Natural killer cell (primary cell): ENCODE measurements at regions of chr1 and their contacts with region 1.

Region 1: GRCh38 chr1:91883470-91883869 is 2.5 kb downstream of the TGFBR3 start:
- DNase-seq: peak in 1 of 2 donors; percentile 67
- ATAC-seq: peak in 1 of 3 donors; percentile 18
- H3K4me3 ChIP-seq: peak overlapping the region; percentile 52
- H3K4me3 Mint-ChIP-seq: peak overlapping the region; percentile 99
- H3K27ac ChIP-seq: no peak overlapping the region
- H3K27ac Mint-ChIP-seq: peak overlapping the region; percentile 85 to 97
- H3K4me1 ChIP-seq: peaks cover 43% of the 10 kb centered on the region
- H3K4me1 Mint-ChIP-seq: peaks cover 61 to 65% of the 10 kb centered on the region in 2 donors
- H3K27me3 ChIP-seq: no peaks in the 10 kb centered on the region
- H3K27me3 Mint-ChIP-seq: no peaks in the 10 kb centered on the region
- CTCF ChIP-seq: peak; percentile 64

Region 2: DNA sequence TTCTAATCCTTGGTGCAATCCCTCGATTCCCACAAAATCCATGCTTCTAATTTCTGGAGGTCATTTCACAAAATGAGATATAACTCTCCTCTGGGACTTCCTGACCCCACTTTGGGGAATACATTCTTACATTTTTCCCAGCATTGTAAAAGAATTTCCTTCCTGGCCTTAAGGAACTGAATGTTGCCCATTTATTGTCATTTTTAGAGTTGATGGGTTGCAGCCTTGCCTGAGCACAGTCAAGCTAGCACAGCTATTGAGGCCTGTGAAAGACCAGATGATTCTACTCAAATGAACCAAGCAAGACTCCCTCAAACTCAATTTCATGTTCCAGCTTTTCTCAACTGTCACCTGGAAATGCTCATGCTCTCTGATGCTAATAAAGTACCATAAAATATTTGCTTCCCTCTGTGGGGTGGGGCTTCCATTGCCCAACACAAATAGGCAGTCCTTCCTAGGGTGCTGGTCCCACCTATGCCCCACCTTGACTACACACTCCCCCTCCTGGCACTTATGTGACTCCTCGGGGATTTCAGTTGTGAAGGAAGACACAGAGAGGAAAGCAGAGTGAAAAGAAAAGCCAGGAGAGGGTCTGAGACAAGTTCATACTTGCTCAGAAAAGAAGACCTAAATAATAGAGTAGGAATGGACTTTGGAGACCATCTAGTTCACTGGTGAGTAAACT is 406.8 kb before region 1 on chr1:
- intact Hi-C with region 1: no loop called
- DNase-seq: no peak
- ATAC-seq: no peak
- H3K4me3 ChIP-seq: no peak overlapping the region
- H3K4me3 Mint-ChIP-seq: no peak overlapping the region
- H3K27ac ChIP-seq: no peak overlapping the region
- H3K27ac Mint-ChIP-seq: no peak overlapping the region
- H3K4me1 ChIP-seq: no peaks in the 10 kb centered on the region
- H3K4me1 Mint-ChIP-seq: no peaks in the 10 kb centered on the region
- H3K27me3 ChIP-seq: no peaks in the 10 kb centered on the region
- H3K27me3 Mint-ChIP-seq: peaks cover 0 to 3% of the 10 kb centered on the region in 2 donors
- CTCF ChIP-seq: no peak

Region 3: DNA sequence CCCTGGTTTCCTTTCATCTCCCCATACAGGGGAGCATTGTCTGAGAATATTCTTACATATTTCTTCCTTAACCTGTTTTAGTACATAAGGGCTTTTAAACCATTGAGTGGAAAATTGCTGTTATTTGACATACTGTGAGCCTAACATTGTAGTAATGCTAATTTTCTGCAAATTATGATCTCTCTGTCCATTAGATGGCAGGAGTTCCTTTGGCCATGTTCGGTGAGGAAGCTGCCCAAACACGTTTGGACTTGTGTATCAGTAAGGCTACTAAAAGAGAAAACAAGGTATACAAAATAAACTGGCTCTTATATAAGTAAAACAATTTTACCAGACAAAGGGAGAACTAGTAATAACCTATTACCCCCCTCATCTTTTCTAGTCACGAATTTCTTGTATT is 353.6 kb before region 1 on chr1:
- intact Hi-C with region 1: loop called (anchors 5 kb)
- DNase-seq: peak in 1 of 2 donors; percentile 29
- ATAC-seq: peak in 2 of 3 donors; percentile 21 to 25
- H3K4me3 ChIP-seq: no peak overlapping the region
- H3K4me3 Mint-ChIP-seq: no peak overlapping the region
- H3K27ac ChIP-seq: no peak overlapping the region
- H3K27ac Mint-ChIP-seq: peak overlapping the region; percentile 68 to 84
- H3K4me1 ChIP-seq: peaks cover 42% of the 10 kb centered on the region
- H3K4me1 Mint-ChIP-seq: peaks cover 66 to 68% of the 10 kb centered on the region in 2 donors
- H3K27me3 ChIP-seq: no peaks in the 10 kb centered on the region
- H3K27me3 Mint-ChIP-seq: no peaks in the 10 kb centered on the region
- CTCF ChIP-seq: peak; percentile 27

Region 4: GRCh38 chr1:91754348-91754747 is 129.1 kb before region 1 on chr1:
- intact Hi-C with region 1: loop called (anchors 1 kb)
- DNase-seq: no peak
- ATAC-seq: peak; percentile 32 to 61 (median 52)
- H3K4me3 ChIP-seq: no peak overlapping the region
- H3K4me3 Mint-ChIP-seq: peak overlapping the region; percentile 62
- H3K27ac ChIP-seq: peak overlapping the region; percentile 57
- H3K27ac Mint-ChIP-seq: peak overlapping the region; percentile 86 to 87
- H3K4me1 ChIP-seq: peaks cover 36% of the 10 kb centered on the region
- H3K4me1 Mint-ChIP-seq: peaks cover 70 to 76% of the 10 kb centered on the region in 2 donors
- H3K27me3 ChIP-seq: no peaks in the 10 kb centered on the region
- H3K27me3 Mint-ChIP-seq: no peaks in the 10 kb centered on the region
- CTCF ChIP-seq: no peak

Region 5: DNA sequence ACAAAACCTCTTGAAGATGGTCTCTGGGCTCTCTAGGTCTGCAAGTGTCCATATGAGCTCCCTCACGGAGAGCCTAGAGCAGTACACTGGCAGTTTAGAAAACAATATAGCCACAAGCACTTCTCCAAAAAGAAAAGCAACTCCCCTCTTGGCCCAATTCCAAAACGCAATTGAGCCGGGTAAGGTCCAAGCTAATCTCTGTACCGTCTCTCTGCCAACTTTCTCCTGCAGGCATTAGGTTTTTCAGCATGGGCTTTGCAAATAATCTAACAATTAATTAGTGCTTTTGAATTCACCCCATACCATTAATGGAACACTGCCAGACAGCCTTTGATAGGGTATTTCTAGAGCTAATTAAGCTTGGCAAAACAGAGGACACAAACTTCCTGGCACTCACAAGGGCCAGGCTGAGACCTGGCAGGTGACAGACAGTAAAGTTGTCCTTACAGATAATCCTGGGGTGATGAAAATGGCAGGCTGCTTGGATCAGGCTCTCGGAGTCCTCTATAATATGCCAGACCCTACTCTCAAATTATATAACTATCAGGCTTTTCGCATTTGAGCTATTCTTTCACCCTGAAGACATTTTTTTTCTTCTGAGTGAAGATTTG is 37.4 kb before region 1 on chr1:
- intact Hi-C with region 1: loop called (anchors 5 kb)
- DNase-seq: no peak
- ATAC-seq: peak; percentile 41 to 68 (median 61)
- H3K4me3 ChIP-seq: no peak overlapping the region
- H3K4me3 Mint-ChIP-seq: peak overlapping the region; percentile 73
- H3K27ac ChIP-seq: peak overlapping the region; percentile 21
- H3K27ac Mint-ChIP-seq: peak overlapping the region; percentile 69 to 89
- H3K4me1 ChIP-seq: peaks cover 47% of the 10 kb centered on the region
- H3K4me1 Mint-ChIP-seq: peaks cover 92 to 94% of the 10 kb centered on the region in 2 donors
- H3K27me3 ChIP-seq: no peaks in the 10 kb centered on the region
- H3K27me3 Mint-ChIP-seq: no peaks in the 10 kb centered on the region
- CTCF ChIP-seq: no peak